OCI-LY7 (cell line): ENCODE measurements at regions of chr12 and their contacts with region 1.

Region 1: DNA sequence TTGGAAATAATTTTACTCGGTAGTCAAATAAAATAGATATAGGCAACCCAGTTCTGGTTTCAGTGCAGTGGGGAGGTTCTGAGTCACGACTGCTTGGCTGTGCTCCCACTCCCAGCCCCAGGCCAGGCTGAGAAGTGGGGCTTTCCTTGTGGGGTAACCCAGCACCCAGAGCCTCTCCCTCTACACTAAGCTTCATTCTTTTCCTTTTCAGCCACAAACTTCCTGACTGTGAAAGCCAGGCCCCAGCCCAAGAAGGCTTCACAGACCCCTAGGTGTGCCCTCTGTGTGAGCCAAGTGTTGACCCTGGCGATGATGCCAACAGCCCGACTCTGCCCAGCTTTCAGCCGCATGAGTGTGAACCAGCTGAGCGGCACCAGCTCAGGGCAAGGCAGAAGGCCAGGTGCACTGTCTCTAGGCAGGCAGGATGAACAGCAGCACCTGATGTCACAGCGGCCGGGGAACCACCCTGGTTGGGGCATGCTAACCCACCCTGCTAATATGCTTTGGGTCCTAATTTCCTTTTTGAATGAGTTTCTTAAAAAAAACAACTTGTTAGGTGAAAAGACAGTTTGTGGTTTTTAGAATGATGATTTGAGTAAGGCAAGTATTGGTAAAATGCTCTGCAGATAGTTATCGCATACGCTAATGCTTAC is 42.2 kb upstream of the ATP23 start:
- DNase-seq: peak; percentile 86
- H3K4me3 ChIP-seq: peak overlapping the region; percentile 24
- H3K27ac ChIP-seq: peak overlapping the region; percentile 82
- H3K4me1 ChIP-seq: peaks cover 61% of the 10 kb centered on the region
- CTCF ChIP-seq: no peak

Region 2: DNA sequence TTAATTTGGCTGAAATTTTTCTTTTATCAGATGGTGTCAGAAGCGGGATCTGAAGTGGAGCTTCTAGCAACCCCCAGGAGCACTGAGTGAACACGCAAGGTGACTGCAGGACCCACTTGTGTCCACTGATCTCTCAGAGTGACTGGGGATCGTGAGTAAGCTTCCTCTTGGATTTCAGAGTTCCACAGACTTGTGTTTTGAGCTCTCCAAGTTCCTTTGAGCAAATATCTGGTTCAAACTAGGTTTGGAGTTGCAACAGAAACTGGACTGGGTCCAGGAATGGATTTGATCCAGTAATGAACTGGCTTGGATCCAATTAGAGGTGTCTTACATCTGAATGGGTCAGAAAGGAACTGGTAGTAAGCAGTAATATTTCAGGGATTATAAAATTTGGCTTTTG is 241.4 kb before region 1 on chr12:
- CTCF ChIA-PET with region 1: no interaction called
- POLR2A ChIA-PET with region 1: no interaction called
- intact Hi-C with region 1: no loop called
- DNase-seq: no peak
- H3K4me3 ChIP-seq: no peak overlapping the region
- H3K27ac ChIP-seq: no peak overlapping the region
- H3K4me1 ChIP-seq: no peaks in the 10 kb centered on the region
- CTCF ChIP-seq: no peak

Region 3: DNA sequence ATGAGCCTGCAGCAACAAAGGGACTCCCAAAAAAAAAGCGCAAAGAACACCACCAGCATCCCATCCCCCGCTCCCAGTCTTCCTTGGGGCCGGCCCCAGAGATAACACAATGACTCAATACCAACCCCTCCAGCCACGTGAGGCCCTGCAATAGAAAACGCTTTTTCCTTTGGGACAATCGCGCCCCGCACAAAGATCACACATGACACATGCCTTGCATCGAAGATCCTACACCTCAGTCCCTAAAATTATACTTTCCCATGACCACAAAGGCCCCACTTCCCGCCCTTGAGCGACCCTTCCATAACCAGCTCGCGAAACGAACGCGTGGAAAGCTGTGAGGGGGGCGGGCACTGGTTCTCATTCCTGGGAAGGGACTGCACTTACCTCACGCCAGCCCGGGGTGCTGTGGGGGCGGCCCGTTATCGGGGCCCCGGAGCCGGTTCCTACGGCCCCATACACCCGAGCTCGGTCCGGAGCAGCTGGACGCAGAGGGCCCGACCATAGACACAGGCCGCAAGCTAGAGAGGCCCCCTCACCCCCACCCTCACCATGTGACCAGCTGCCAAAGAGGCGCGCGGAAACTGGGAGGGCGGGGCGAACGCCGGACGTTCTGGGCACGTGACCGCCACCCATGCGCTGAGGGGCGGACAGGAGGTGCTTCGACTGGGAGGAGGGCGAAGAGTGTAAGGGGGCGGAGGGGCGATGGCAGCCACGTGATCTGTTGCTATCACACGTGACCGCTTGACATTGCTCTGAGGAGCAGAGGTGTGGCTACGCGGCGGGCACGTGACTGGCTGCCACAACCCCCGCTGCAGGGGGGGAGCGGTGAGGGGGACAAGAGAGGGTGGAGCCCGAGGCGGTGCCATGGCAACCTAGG is 147.1 kb before region 1 on chr12 and contains the start of gene CDK4:
- CTCF ChIA-PET with region 1: interaction called, 3 read pairs
- POLR2A ChIA-PET with region 1: no interaction called
- intact Hi-C with region 1: loop called (anchors 2 kb)
- DNase-seq: peak; percentile 100
- H3K4me3 ChIP-seq: peak within 1 kb of the TSS; percentile 92
- H3K27ac ChIP-seq: peak within 1 kb of the TSS; percentile 42
- H3K4me1 ChIP-seq: peaks cover 39% of the 10 kb centered on the region
- CTCF ChIP-seq: no peak
- total RNA-seq, gene CDK4: 272 and 280 TPM in 2 replicates

Region 4: GRCh38 chr12:57836442-57837375 is 62.4 kb before region 1 on chr12:
- CTCF ChIA-PET with region 1: interaction called, 23 read pairs
- POLR2A ChIA-PET with region 1: interaction called, 153 read pairs
- intact Hi-C with region 1: no loop called
- DNase-seq: peak; percentile 83
- H3K4me3 ChIP-seq: peak overlapping the region; percentile 59
- H3K27ac ChIP-seq: peak overlapping the region; percentile 80
- H3K4me1 ChIP-seq: peaks cover 100% of the 10 kb centered on the region
- CTCF ChIP-seq: no peak

Region 5: GRCh38 chr12:57846577-57847319 is 52.4 kb before region 1 on chr12 and contains the start of gene CTDSP2:
- CTCF ChIA-PET with region 1: interaction called, 18 read pairs
- POLR2A ChIA-PET with region 1: interaction called, 153 read pairs
- intact Hi-C with region 1: loop called (anchors 1 kb)
- DNase-seq: peak; percentile 97
- H3K4me3 ChIP-seq: peak within 1 kb of the TSS; percentile 96
- H3K27ac ChIP-seq: peak within 1 kb of the TSS; percentile 70
- H3K4me1 ChIP-seq: peaks cover 45% of the 10 kb centered on the region
- CTCF ChIP-seq: no peak
- total RNA-seq, gene CTDSP2: 38.8 and 44.2 TPM in 2 replicates

Region 6: GRCh38 chr12:57881475-57881874 is 17.7 kb before region 1 on chr12:
- CTCF ChIA-PET with region 1: interaction called, 7 read pairs
- POLR2A ChIA-PET with region 1: interaction called, 28 read pairs
- intact Hi-C with region 1: no loop called
- DNase-seq: no peak
- H3K4me3 ChIP-seq: no peak overlapping the region
- H3K27ac ChIP-seq: no peak overlapping the region
- H3K4me1 ChIP-seq: no peaks in the 10 kb centered on the region
- CTCF ChIP-seq: no peak

Region 7: GRCh38 chr12:57941165-57941894 is 42.2 kb after region 1 on chr12 and contains the start of gene ATP23:
- CTCF ChIA-PET with region 1: no interaction called
- POLR2A ChIA-PET with region 1: interaction called, 16 read pairs
- intact Hi-C with region 1: no loop called
- DNase-seq: peak; percentile 96
- H3K4me3 ChIP-seq: peak within 1 kb of the TSS; percentile 88
- H3K27ac ChIP-seq: peak within 1 kb of the TSS; percentile 81
- H3K4me1 ChIP-seq: peaks cover 39% of the 10 kb centered on the region
- CTCF ChIP-seq: no peak
- total RNA-seq, gene ATP23: 42.9 and 51.3 TPM in 2 replicates